Activated CD4-positive, alpha-beta memory T cell treated with anti-CD3 and anti-CD28 coated beads for 36 hours (primary cell): ENCODE measurements at regions of chr3 and their contacts with region 1.

Region 1: GRCh38 chr3:18679238-18679637 is 254.1 kb upstream of the SATB1 start:
- DNase-seq: peak; percentile 75
- H3K4me3 Mint-ChIP-seq: peak overlapping the region; percentile 53
- H3K27ac Mint-ChIP-seq: peak overlapping the region; percentile 90
- H3K4me1 Mint-ChIP-seq: peaks cover 81% of the 10 kb centered on the region
- H3K27me3 Mint-ChIP-seq: no peaks in the 10 kb centered on the region

Region 2: DNA sequence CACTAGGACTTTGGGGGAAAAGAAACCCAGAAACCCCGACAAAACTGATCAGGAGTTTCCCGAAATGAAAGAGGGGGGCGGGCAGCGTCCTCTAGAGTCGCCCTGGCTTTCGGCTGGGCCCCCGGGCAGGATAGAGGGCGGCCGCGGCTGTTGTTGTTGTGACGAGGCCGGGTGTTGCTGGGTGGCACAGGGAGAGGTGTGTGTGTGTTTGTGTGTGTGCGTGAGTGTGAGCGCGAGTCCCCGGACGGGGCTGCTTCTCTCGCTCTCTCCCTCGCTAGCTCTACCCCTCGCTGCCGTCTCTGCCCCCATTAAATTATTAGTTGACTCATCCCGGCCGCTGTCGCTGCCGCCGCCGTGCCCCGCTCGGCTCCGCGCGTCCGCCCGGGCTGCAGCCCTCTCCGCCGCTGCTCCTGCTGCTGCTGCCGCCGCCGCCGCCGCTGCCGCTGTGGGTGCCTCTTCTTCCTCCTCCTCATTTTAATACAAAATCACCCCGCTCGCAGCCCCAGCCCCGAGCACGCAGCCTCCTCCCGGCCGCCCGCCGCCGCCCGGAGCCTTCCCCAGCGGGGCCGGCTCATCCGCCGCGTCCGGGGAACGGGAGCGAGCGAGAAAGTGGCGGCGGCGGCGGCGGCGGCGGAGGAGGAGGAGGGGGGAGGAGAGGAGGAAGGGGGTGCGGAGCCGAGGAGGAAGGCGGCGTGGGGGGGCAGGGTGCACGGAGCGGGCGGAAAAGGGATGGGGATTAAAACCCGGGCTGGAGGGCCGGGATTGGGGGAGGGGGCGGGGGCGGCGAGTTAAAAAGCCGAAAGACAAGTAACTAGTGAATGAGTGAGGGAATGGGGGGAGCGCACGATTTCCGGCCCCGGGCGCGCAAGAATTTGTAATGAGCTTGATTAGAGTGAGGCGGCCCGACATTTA is 254.3 kb before region 1 on chr3 and contains the start of gene SATB1:
- CTCF ChIA-PET with region 1: no interaction called
- POLR2A ChIA-PET with region 1: no interaction called
- intact Hi-C with region 1: loop called (anchors 2 kb)
- DNase-seq: peak; percentile 78
- H3K4me3 Mint-ChIP-seq: peak within 1 kb of the TSS; percentile 86
- H3K27ac Mint-ChIP-seq: peak within 1 kb of the TSS; percentile 84
- H3K4me1 Mint-ChIP-seq: peaks cover 74% of the 10 kb centered on the region
- H3K27me3 Mint-ChIP-seq: no peaks in the 10 kb centered on the region
- total RNA-seq, gene SATB1: 546 to 561 TPM

Region 3: DNA sequence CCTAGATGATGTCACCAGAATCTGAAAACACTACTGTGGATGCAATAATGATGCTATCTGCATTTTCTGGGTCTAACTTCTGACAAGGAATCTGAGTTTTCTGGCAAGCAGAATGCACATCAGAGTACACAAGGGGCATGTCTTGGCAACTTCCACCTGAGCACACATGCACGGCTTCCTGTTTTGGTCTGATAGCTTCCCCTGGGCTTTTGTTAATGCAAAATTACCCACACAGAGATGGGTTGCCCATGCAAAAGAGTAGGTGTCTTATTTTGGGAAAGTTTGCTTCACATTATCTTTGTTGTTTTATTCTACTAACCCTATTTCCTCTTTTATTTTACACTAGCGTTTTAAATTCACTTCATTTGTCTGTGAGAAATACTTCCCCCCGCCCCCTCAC is 179.9 kb before region 1 on chr3:
- CTCF ChIA-PET with region 1: no interaction called
- POLR2A ChIA-PET with region 1: no interaction called
- intact Hi-C with region 1: no loop called
- DNase-seq: peak; percentile 19
- H3K4me3 Mint-ChIP-seq: no peak overlapping the region
- H3K27ac Mint-ChIP-seq: peak overlapping the region; percentile 31
- H3K4me1 Mint-ChIP-seq: peaks cover 37% of the 10 kb centered on the region
- H3K27me3 Mint-ChIP-seq: no peaks in the 10 kb centered on the region

Region 4: DNA sequence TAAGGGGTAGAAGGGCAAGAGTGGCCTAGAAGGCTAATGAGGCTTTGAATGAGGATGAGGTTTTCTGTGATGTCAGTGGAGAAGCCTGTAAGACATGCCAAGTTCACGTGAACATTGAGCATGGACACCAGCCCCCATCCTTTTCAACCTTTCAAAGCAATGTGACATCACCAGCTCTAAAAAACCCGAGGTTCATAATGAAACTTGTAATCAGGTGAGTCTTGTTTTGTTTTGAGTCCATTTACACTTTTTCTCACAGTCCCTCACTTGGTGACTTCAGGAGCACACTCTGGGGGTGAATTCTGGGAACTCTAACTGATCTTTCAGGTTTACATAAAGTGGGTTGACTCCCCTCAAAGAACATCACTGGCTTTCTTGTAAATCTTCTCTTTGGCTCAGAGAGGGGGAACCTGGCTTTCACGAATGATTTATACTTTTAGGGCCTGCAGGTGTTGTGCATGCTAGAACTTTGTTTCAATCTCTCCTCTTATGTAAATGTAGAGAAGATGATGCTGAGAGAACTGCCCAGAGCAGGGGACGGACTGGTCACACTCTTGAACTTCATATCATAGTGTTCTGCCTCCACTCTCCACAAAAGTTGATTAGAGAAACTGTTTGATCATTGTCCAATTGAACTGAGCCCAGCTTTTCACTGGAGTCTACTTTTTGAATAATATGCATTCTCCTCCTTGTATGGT is 29.4 kb before region 1 on chr3:
- CTCF ChIA-PET with region 1: interaction called, 5 read pairs
- POLR2A ChIA-PET with region 1: interaction called, 15 read pairs
- intact Hi-C with region 1: loop called (anchors 1 kb)
- DNase-seq: peak; percentile 76
- H3K4me3 Mint-ChIP-seq: peak overlapping the region; percentile 30
- H3K27ac Mint-ChIP-seq: peak overlapping the region; percentile 98
- H3K4me1 Mint-ChIP-seq: peaks cover 89% of the 10 kb centered on the region
- H3K27me3 Mint-ChIP-seq: no peaks in the 10 kb centered on the region

Region 5: GRCh38 chr3:18657858-18658820 is 21.1 kb before region 1 on chr3:
- CTCF ChIA-PET with region 1: no interaction called
- POLR2A ChIA-PET with region 1: interaction called, 9 read pairs
- intact Hi-C with region 1: loop called (anchors 1 kb)
- DNase-seq: peak; percentile 59
- H3K4me3 Mint-ChIP-seq: peak overlapping the region; percentile 67
- H3K27ac Mint-ChIP-seq: peak overlapping the region; percentile 78
- H3K4me1 Mint-ChIP-seq: peaks cover 78% of the 10 kb centered on the region
- H3K27me3 Mint-ChIP-seq: no peaks in the 10 kb centered on the region

Region 6: DNA sequence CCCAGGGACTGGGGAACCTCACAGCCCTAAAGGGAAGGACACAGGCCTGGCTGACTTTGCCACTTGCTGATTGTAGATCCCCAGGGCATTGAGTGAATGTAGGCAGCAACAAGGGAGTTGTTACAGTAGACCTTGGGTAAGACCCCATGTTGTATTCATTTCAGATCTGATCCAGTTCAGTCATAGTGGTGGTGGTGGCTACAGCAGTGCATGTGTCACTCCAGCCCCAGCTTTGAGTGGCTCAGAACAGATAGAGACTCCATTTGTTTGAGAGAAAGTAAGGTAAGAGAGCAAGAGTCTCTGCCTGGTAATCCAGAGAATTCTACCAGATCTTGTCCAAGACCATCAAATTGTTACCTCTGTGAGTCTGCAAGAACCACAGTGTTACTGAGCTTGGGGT is 24.6 kb after region 1 on chr3:
- CTCF ChIA-PET with region 1: no interaction called
- POLR2A ChIA-PET with region 1: no interaction called
- intact Hi-C with region 1: loop called (anchors 2 kb)
- DNase-seq: peak; percentile 35
- H3K4me3 Mint-ChIP-seq: no peak overlapping the region
- H3K27ac Mint-ChIP-seq: no peak overlapping the region
- H3K4me1 Mint-ChIP-seq: peaks cover 12% of the 10 kb centered on the region
- H3K27me3 Mint-ChIP-seq: no peaks in the 10 kb centered on the region

Region 7: GRCh38 chr3:18717598-18717997 is 38.4 kb after region 1 on chr3:
- CTCF ChIA-PET with region 1: interaction called, 7 read pairs
- POLR2A ChIA-PET with region 1: interaction called, 8 read pairs
- intact Hi-C with region 1: loop called (anchors 1 kb)
- DNase-seq: no peak
- H3K4me3 Mint-ChIP-seq: no peak overlapping the region
- H3K27ac Mint-ChIP-seq: peak overlapping the region; percentile 91
- H3K4me1 Mint-ChIP-seq: peaks cover 73% of the 10 kb centered on the region
- H3K27me3 Mint-ChIP-seq: no peaks in the 10 kb centered on the region

Region 8: GRCh38 chr3:18758047-18758704 is 78.9 kb after region 1 on chr3:
- CTCF ChIA-PET with region 1: interaction called, 9 read pairs
- POLR2A ChIA-PET with region 1: interaction called, 4 read pairs
- intact Hi-C with region 1: loop called (anchors 1 kb)
- DNase-seq: no peak
- H3K4me3 Mint-ChIP-seq: no peak overlapping the region
- H3K27ac Mint-ChIP-seq: peak overlapping the region; percentile 78
- H3K4me1 Mint-ChIP-seq: peaks cover 39% of the 10 kb centered on the region
- H3K27me3 Mint-ChIP-seq: no peaks in the 10 kb centered on the region